ENCODE measurements at regions of chr14 and their contacts with region 1.

Region 1: DNA sequence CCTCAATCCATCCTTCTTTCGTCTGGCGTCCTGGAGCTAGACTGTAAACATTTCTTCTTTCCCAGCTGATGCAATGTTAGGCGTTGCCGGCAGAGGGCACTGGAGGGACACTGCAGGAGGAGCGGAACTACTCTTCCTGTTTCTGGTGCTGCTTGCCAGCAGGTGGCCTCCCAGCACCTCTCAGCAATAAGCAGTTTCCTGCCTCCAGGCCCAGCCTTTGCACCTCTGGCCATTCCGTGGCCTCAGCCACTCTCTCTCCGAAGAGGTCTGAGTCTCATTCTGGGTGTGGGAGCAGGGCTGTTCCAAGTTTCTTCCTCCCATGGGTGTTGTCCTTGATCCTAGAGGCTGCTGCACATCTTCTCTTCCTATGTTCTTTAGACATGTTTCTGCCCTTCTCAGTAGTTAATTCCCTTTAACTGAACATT is 7.5 kb upstream of the ASPG start:
- DNase-seq: peak; percentile 90
- ATAC-seq: peak; percentile 100
- H3K4me3 Mint-ChIP-seq: no peak overlapping the region
- H3K27ac Mint-ChIP-seq: no peak overlapping the region
- H3K4me1 Mint-ChIP-seq: peaks cover 7% of the 10 kb centered on the region
- H3K27me3 Mint-ChIP-seq: peaks cover 10% of the 10 kb centered on the region
- CTCF ChIP-seq: peak; percentile 100

Region 2: DNA sequence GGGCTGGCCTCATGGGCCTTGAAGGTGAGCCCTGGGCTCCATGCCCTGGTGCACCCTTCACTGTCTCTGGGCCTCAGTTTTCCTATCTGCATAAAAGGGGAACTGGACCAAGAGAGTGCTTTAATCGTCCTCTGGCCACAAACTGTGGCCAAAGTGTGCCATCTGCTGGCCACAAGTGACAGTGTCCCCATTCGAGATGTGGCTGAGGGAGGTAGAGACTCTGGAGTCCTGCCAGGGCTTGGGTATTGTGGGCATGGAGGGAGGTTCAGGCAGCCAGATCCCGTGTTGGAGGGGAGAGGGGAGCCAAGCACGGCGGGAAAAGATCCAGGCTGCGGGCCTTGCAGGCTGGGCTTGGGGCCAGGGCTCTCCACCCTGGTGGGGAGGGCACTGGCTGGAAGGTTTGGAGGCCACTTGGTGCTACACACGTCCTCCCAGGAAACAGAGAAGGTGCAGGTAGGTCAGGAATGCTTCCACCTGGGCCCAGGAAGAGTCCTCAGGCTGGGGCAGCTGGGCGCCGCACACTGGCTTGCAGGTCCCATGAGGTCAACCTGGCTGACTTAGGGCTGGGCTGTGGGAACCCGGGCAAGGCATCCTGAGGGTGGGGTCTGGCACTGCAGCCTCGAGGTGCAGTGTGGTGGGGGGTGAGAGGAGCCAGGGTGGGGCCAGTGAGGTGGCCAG is 53.1 kb after region 1 on chr14:
- CTCF ChIA-PET with region 1: interaction called, 20 read pairs
- POLR2A ChIA-PET with region 1: no interaction called
- intact Hi-C with region 1: loop called (anchors 5 kb)
- DNase-seq: peak; percentile 29
- ATAC-seq: no peak
- H3K4me3 Mint-ChIP-seq: no peak overlapping the region
- H3K27ac Mint-ChIP-seq: no peak overlapping the region
- H3K4me1 Mint-ChIP-seq: no peaks in the 10 kb centered on the region
- H3K27me3 Mint-ChIP-seq: peaks cover 41% of the 10 kb centered on the region
- CTCF ChIP-seq: peak; percentile 47

Region 3: DNA sequence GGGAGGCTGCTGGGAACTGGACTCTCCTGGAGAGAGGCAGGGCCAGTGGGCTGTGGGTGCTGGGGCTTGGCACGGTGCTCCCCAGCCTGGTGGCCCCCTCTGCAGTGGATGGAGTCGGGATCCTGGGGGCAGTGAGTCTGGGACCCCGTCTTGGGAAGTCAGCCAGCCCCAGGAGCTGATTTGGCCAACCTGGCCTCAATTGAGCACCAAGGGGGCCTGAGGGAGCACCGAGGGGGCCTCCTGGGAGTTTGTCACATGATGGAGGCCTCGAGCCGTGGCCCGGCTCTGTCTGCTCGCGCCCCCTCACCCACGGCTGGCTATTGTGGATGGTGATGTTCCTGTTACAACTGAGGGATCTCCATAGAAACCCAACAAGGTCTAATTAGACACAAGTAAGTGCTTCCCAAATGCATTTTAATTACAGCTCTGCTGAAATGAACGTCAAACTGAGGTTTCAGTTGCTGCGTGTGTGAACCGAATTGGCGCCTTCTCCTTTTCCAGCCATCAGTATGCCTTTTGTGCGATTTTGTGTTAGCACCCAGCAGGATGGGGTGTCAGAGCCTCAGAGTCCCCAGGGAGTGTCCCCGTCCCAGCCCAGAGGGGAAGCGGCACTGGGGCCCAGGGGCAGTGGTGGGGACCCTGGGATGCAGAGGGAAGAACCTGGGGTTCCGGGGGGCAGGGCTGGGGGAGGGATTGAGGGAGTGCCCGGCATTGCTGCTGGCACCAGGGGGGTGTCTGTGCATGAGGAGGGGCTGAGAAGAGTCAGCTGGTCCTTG is 132.2 kb after region 1 on chr14:
- CTCF ChIA-PET with region 1: no interaction called
- POLR2A ChIA-PET with region 1: no interaction called
- intact Hi-C with region 1: no loop called
- DNase-seq: no peak
- ATAC-seq: no peak
- H3K4me3 Mint-ChIP-seq: no peak overlapping the region
- H3K27ac Mint-ChIP-seq: no peak overlapping the region
- H3K4me1 Mint-ChIP-seq: no peaks in the 10 kb centered on the region
- H3K27me3 Mint-ChIP-seq: peaks cover 2% of the 10 kb centered on the region
- CTCF ChIP-seq: no peak

Region 4: DNA sequence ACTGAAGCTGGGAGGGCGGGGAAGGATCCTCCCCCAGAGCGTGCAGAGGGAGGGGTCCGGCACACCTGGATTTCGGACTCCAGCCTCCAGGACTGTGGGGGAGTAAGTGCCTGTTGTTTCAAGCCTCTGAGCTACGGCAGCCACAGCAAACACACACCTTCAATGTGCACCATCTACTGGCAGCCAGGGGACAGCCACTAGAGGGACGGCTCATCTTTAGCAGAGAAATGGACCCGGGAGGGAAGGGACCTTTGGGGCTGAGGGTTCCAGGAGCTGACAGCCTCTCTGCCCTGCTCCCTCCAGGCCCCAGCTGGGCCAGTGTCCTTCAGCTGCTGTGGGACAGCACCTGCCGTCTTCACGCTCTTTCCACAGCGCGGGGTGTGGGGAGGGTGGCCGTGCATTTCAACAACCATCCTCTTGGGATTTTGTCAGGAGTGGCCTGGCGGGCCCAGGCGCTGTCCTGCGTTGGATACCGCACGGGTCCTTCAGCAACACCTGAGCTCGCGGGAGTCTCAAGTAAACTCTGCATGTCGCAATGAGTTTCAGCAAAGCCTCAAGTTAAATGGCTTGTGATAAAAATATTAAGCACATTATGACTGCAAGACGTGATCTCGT is 292.3 kb after region 1 on chr14:
- CTCF ChIA-PET with region 1: no interaction called
- POLR2A ChIA-PET with region 1: no interaction called
- intact Hi-C with region 1: no loop called
- DNase-seq: no peak
- ATAC-seq: no peak
- H3K4me3 Mint-ChIP-seq: no peak overlapping the region
- H3K27ac Mint-ChIP-seq: no peak overlapping the region
- H3K4me1 Mint-ChIP-seq: peaks cover 2% of the 10 kb centered on the region
- H3K27me3 Mint-ChIP-seq: no peaks in the 10 kb centered on the region
- CTCF ChIP-seq: no peak

Region 5: GRCh38 chr14:104563742-104564615 is 485.9 kb after region 1 on chr14:
- CTCF ChIA-PET with region 1: interaction called, 13 read pairs
- POLR2A ChIA-PET with region 1: no interaction called
- intact Hi-C with region 1: no loop called
- DNase-seq: peak; percentile 78
- ATAC-seq: peak; percentile 91
- H3K4me3 Mint-ChIP-seq: no peak overlapping the region
- H3K27ac Mint-ChIP-seq: no peak overlapping the region
- H3K4me1 Mint-ChIP-seq: no peaks in the 10 kb centered on the region
- H3K27me3 Mint-ChIP-seq: peaks cover 8% of the 10 kb centered on the region
- CTCF ChIP-seq: peak; percentile 66

Measured in activated CD8-positive, alpha-beta T cell treated with anti-CD3 and anti-CD28 coated beads for 36 hours (primary cell).